Calu3 (cell line): ENCODE measurements at regions of chr14 and their contacts with region 1.

Region 1: DNA sequence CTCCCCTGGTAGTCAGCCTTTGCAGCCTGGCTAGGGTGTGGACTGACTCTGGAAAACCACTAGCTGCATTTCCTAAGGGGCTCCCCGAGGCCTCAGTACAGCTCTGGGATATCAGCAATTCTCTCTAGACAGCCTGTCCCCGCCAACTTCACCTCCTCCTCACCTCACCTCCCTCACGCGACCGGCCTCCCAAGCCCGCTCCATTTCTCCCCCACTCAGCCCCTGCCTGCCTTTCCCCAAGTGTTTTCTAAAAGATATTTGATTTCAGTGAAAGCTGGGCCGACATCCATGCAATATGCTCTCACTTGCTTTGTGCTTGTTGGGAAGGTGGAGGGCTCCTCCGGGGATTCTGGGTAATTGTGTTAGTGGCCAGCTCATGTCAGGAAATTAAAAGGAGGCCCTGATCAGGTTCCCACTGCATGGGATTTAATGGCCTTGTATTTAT is 91.8 kb downstream of the ESRRB start:
- DNase-seq: no peak
- H3K4me3 Mint-ChIP-seq: no peak overlapping the region
- H3K27ac Mint-ChIP-seq: no peak overlapping the region
- H3K4me1 Mint-ChIP-seq: no peaks in the 10 kb centered on the region
- H3K27me3 Mint-ChIP-seq: peaks cover 51% of the 10 kb centered on the region
- CTCF ChIP-seq: no peak

Region 2: DNA sequence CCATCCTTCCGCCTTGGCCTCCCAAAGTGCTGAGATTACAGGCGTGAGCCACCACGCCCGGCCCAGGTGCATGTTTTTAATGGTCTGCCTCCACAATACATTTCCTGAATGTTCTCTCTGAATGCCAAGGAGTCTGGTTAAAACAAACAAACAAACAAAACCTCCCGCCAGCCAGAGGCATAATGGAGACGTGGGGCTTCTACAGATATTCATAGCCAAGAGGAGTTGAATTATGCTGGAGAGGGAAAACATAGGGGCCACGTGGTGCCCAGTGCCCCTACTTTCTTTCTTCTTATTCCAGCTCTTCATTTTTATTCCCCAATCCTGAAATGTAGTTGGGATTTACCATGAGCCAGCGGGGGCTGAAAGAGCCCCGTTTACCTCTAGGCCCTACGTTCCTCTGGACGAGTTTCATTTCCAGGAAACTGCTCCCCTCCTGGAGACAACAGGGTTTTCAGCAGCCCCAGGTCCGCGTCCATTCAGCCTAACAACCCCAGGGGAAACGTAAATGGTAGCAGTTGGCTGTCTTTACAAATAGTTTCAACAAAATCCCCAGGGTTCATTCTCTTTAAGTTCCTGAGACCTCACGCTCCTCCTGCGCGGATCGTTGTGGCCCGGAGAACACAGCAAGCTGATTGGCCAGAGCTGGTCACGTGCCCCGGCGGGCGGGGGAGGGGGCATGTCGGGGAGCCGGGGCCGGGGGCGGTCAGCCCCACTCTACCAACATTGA is 200.2 kb before region 1 on chr14:
- CTCF ChIA-PET with region 1: no interaction called
- intact Hi-C with region 1: no loop called
- DNase-seq: peak; percentile 64
- H3K4me3 Mint-ChIP-seq: peak overlapping the region; percentile 58
- H3K27ac Mint-ChIP-seq: no peak overlapping the region
- H3K4me1 Mint-ChIP-seq: no peaks in the 10 kb centered on the region
- H3K27me3 Mint-ChIP-seq: peaks cover 30% of the 10 kb centered on the region
- CTCF ChIP-seq: no peak

Region 3: GRCh38 chr14:76408877-76409276 is 58.9 kb before region 1 on chr14:
- CTCF ChIA-PET with region 1: interaction called, 10 read pairs
- intact Hi-C with region 1: no loop called
- DNase-seq: no peak
- H3K4me3 Mint-ChIP-seq: no peak overlapping the region
- H3K27ac Mint-ChIP-seq: no peak overlapping the region
- H3K4me1 Mint-ChIP-seq: no peaks in the 10 kb centered on the region
- H3K27me3 Mint-ChIP-seq: peaks cover 77% of the 10 kb centered on the region
- CTCF ChIP-seq: no peak

Region 4: DNA sequence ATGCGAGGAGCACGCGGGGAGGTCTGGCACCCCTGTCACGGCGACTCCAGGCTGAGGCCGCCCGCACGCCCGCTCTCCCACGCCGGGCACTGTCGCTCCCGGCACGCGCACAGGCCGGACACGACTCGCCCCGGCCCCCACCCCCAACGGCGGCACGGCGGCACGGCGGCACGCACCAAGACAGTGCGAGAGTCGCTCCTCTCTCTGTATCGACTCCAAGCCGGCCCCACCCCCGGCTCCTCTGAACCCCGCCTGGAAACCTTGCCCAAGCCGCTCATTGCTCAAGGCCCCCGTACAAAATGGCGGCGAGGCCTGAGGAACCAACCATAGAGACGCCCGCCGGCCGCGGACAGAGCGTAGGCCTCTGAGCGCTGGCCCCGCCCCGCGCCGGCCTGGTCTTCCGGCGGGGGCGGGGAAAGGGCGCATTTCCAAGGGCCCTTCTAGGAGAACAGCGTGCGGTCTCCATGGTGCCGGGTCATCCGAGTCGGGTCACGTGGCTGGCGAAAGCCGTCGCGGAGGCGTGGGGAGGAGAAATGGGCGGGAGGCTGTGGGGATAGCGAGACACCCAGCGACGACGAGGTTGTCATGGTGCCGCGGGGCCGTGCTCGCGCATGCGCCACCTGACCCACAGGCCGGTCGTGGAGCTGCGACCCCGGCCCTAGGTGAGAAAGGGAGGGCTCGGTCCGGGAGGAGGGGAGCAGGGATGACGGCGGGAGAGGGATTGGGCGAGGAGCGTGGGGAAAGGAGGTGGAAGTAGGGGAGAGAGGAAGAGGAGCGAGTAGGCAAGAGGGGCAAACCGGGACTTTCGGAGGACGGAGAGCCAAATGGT is 630.2 kb after region 1 on chr14 and contains the start of gene CIPC:
- CTCF ChIA-PET with region 1: no interaction called
- intact Hi-C with region 1: no loop called
- DNase-seq: peak; percentile 98
- H3K4me3 Mint-ChIP-seq: peak within 1 kb of the TSS; percentile 97
- H3K27ac Mint-ChIP-seq: peak within 1 kb of the TSS; percentile 94
- H3K4me1 Mint-ChIP-seq: peaks cover 45% of the 10 kb centered on the region
- H3K27me3 Mint-ChIP-seq: no peaks in the 10 kb centered on the region
- CTCF ChIP-seq: no peak
- total RNA-seq, gene CIPC: 16.5 and 18.9 TPM in 2 replicates